SK-N-SH (cell line): ENCODE measurements at regions of chr14 and their contacts with region 1.

Region 1: DNA sequence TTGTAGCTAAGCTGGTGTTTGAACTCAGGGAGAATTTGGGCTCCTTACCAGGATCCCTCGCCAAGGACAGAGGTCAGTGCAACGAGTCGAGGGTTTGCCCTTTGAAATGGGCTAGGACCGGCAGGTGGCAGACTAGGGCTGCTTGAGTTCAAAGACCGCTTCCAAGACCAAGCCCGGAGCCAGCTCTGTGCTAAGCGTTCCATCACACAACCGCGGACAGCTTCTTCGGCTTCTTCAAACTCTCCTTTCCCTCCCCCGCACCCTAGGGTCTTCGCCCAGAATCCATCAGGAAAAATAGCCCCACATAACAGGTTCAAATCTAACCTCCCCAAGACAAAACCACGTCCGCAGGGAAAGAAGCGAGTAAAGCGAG is 705 bp upstream of the FLVCR2 start:
- DNase-seq: peak; percentile 87
- H3K4me3 ChIP-seq: peak overlapping the region; percentile 57 to 82
- H3K27ac ChIP-seq: no peak overlapping the region
- H3K4me1 ChIP-seq: peaks cover 0 to 11% of the 10 kb centered on the region in 2 experiments; a peak in 1 of 4 replicates
- H3K27me3 ChIP-seq: peaks cover 35% of the 10 kb centered on the region
- CTCF ChIP-seq: peak; percentile 77
- EP300 ChIP-seq: no peak
- RAD21 ChIP-seq: peak; percentile 89

Region 2: DNA sequence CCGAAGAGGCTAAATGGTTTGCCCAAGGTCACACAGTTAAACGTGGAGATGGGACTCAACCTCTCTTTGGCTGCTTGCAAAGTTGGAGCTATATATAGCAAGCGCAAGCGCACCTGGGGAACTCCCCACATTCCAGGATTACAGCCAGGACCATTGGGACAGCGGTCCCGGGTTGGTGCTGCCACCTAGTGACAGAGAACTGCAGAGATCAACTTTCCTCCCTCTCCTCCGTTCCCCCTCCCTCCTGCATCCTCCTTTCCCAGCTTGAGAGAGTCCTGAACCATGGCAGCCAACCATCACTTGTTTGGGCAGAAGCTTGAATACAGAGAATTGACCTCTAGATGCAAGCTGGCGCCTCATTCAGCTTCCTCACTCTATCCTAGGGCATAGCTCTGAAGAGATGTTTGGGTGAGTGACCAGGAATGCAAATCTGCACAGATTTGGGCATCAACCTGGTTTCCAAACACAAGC is 16.7 kb before region 1 on chr14:
- CTCF ChIA-PET with region 1: interaction called, 113 read pairs
- POLR2A ChIA-PET with region 1: no interaction called
- DNase-seq: peak; percentile 86
- H3K4me3 ChIP-seq: no peak overlapping the region; a peak in 1 of 4 replicates
- H3K27ac ChIP-seq: no peak overlapping the region
- H3K4me1 ChIP-seq: peaks cover 0 to 8% of the 10 kb centered on the region in 2 experiments; a peak in 1 of 4 replicates
- H3K27me3 ChIP-seq: peaks cover 12% of the 10 kb centered on the region; the same call in 1 of the 2 replicates
- CTCF ChIP-seq: peak; percentile 85
- EP300 ChIP-seq: no peak
- RAD21 ChIP-seq: peak; percentile 85

Region 3: GRCh38 chr14:75597149-75597548 is 19.4 kb after region 1 on chr14:
- CTCF ChIA-PET with region 1: interaction called, 42 read pairs
- POLR2A ChIA-PET with region 1: no interaction called
- DNase-seq: no peak
- H3K4me3 ChIP-seq: no peak overlapping the region
- H3K27ac ChIP-seq: no peak overlapping the region
- H3K4me1 ChIP-seq: no peaks in the 10 kb centered on the region
- H3K27me3 ChIP-seq: no peaks in the 10 kb centered on the region; the same call in 1 of the 2 replicates
- CTCF ChIP-seq: no peak
- EP300 ChIP-seq: no peak
- RAD21 ChIP-seq: no peak

Region 4: DNA sequence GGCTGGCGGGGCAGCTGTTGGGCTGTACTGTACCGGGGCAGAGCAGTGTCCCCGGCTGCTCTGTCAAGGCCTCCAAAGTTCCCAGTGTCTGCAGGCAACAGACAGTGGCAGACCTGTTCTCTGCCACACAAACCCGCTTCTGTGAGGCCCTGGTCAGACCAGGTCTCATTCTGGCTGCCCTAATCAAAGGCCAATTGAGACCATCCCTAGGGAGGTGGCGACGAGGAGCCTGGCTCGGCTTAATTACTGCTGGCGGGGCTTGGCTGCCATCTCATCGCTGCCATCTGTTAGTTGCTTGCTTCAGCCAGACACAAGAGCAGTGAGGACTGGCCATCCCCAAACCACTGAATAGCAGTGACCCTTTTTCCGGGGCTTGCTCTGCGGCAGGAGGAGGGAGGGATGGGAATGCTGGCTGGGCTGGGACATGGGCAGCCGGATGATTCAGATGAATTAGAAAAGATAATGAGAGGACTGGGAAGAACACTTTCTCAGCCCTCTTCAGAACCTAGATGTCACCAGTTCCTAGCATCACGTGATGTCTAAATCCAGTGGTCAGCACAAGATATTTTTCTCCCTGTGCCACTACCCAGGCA is 58.5 kb after region 1 on chr14:
- CTCF ChIA-PET with region 1: interaction called, 28 read pairs
- POLR2A ChIA-PET with region 1: no interaction called
- DNase-seq: peak; percentile 77
- H3K4me3 ChIP-seq: no peak overlapping the region
- H3K27ac ChIP-seq: peak overlapping the region in 1 of 2 experiments; percentile 94; a peak in 2 of 4 replicates
- H3K4me1 ChIP-seq: peaks cover 0 to 16% of the 10 kb centered on the region in 2 experiments; a peak in 2 of 4 replicates
- H3K27me3 ChIP-seq: peaks cover 4% of the 10 kb centered on the region; the same call in 1 of the 2 replicates
- CTCF ChIP-seq: no peak
- EP300 ChIP-seq: peak in 1 of 2 experiments; percentile 79; a peak in 2 of 4 replicates
- RAD21 ChIP-seq: no peak

Region 5: GRCh38 chr14:75654127-75654732 is 76.5 kb after region 1 on chr14:
- CTCF ChIA-PET with region 1: interaction called, 439 read pairs
- POLR2A ChIA-PET with region 1: no interaction called
- DNase-seq: peak; percentile 77
- H3K4me3 ChIP-seq: no peak overlapping the region; a peak in 1 of 4 replicates
- H3K27ac ChIP-seq: no peak overlapping the region
- H3K4me1 ChIP-seq: no peaks in the 10 kb centered on the region; a peak in 1 of 4 replicates
- H3K27me3 ChIP-seq: no peaks in the 10 kb centered on the region
- CTCF ChIP-seq: peak; percentile 96
- EP300 ChIP-seq: no peak
- RAD21 ChIP-seq: peak; percentile 91

Region 6: DNA sequence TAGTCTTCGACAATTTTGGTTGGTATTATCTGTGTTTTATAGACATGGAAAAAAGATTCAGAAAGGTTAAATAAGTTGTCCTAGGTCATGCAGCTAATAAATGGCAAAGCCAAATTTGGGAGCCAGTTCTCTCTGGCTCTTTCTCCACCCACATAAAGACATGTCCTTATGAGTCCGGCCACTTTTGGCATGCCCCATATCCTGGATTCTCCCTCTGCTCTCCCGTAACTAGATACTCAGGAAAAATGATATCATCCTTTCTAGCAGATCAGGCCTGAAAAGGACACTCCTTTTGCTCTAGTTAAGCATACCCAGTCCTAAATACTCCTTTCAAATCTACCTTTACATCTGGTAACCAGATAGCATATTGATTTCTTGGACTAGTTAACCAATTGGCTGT is 147.8 kb after region 1 on chr14:
- CTCF ChIA-PET with region 1: no interaction called
- POLR2A ChIA-PET with region 1: no interaction called
- DNase-seq: no peak
- H3K4me3 ChIP-seq: no peak overlapping the region
- H3K27ac ChIP-seq: no peak overlapping the region
- H3K4me1 ChIP-seq: peaks cover 0 to 12% of the 10 kb centered on the region in 2 experiments; a peak in 2 of 4 replicates
- H3K27me3 ChIP-seq: no peaks in the 10 kb centered on the region
- CTCF ChIP-seq: no peak
- EP300 ChIP-seq: no peak
- RAD21 ChIP-seq: no peak

Region 7: GRCh38 chr14:75773046-75773445 is 195.3 kb after region 1 on chr14:
- CTCF ChIA-PET with region 1: no interaction called
- POLR2A ChIA-PET with region 1: no interaction called
- DNase-seq: no peak
- H3K4me3 ChIP-seq: no peak overlapping the region
- H3K27ac ChIP-seq: no peak overlapping the region
- H3K4me1 ChIP-seq: no peaks in the 10 kb centered on the region
- H3K27me3 ChIP-seq: no peaks in the 10 kb centered on the region
- CTCF ChIP-seq: no peak
- EP300 ChIP-seq: no peak
- RAD21 ChIP-seq: no peak

Region 8: GRCh38 chr14:75982266-75983018 is 404.7 kb after region 1 on chr14:
- CTCF ChIA-PET with region 1: interaction called, 17 read pairs
- POLR2A ChIA-PET with region 1: no interaction called
- DNase-seq: peak; percentile 90
- H3K4me3 ChIP-seq: peak overlapping the region; percentile 75 to 95
- H3K27ac ChIP-seq: peak overlapping the region; percentile 64 to 86
- H3K4me1 ChIP-seq: peaks cover 18 to 53% of the 10 kb centered on the region in 2 experiments
- H3K27me3 ChIP-seq: no peaks in the 10 kb centered on the region
- CTCF ChIP-seq: peak; percentile 57
- EP300 ChIP-seq: no peak
- RAD21 ChIP-seq: peak; percentile 81